Heart left ventricle (tissue), 16 donors: ENCODE measurements at regions of chr3 and their contacts with region 1.

Region 1: GRCh38 chr3:48556793-48557626 is at the start of gene PFKFB4:
- DNase-seq: peak; percentile 99
- ATAC-seq: peak; percentile 92 to 94 (median 93)
- H3K4me3 ChIP-seq: peak within 1 kb of the TSS; percentile 26 to 70 (median 58)
- H3K27ac ChIP-seq: peak within 1 kb of the TSS in 11 of 12 donors; percentile 19 to 92 (median 64)
- H3K4me1 ChIP-seq: peaks cover 5 to 83% (median 33%) of the 10 kb centered on the region in 12 donors
- H3K27me3 ChIP-seq: no peaks in the 10 kb centered on the region
- CTCF ChIP-seq: peak in 4 of 12 donors; percentile 11 to 34 (median 20)
- POLR2A ChIP-seq: peak in 1 of 2 donors; percentile 38
- total RNA-seq, gene PFKFB4: 0.44 to 9.1 (median 1.0) TPM

Region 2: DNA sequence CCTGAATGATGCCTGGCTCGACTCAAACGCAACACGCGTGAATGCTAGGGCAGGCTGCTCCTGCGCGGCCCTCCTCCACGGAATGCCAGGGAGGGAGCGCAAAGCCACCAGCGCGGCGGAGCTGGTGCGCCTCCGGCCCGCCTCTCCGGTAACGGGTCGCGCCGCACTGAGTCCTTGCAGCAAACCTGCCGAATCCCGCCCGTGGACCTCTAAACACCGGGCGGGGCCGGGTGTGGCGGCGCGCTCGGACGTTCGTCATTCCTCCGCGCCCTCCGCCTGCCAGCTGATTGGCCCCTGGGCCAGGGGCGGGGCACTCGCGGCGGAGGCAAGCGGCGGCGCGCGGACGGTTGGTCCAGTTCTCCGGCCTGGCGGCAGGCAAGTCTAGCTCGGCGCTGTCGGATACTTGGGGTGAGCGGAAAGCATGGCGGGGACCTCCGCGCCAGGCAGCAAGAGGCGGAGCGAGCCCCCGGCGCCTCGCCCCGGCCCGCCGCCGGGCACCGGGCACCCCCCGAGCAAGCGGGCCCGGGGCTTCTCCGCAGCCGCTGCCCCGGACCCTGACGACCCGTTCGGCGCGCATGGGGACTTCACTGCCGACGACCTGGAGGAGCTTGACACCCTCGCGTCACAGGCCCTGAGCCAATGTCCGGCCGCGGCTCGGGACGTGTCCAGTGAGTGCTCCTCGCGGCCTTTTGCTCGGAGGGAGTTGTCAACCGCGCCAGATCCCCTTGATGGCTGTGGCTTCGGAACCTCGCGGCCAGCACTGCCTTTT is 110.4 kb before region 1 on chr3 and contains the start of gene ATRIP:
- intact Hi-C with region 1: loop called in 1 of 10 experiments (anchors 5 kb)
- DNase-seq: peak; percentile 91 to 96 (median 93)
- ATAC-seq: peak; percentile 95 to 99 (median 99)
- H3K4me3 ChIP-seq: peak within 1 kb of the TSS; percentile 60 to 98 (median 84)
- H3K27ac ChIP-seq: peak within 1 kb of the TSS; percentile 49 to 94 (median 88)
- H3K4me1 ChIP-seq: peaks cover 4 to 31% (median 23%) of the 10 kb centered on the region in 12 donors
- H3K27me3 ChIP-seq: no peaks in the 10 kb centered on the region
- CTCF ChIP-seq: peak in 3 of 12 donors; percentile 8 to 40 (median 9)
- POLR2A ChIP-seq: peak; percentile 90 to 98
- total RNA-seq, gene ATRIP: 2.1 to 5.0 (median 3.6) TPM

Region 3: DNA sequence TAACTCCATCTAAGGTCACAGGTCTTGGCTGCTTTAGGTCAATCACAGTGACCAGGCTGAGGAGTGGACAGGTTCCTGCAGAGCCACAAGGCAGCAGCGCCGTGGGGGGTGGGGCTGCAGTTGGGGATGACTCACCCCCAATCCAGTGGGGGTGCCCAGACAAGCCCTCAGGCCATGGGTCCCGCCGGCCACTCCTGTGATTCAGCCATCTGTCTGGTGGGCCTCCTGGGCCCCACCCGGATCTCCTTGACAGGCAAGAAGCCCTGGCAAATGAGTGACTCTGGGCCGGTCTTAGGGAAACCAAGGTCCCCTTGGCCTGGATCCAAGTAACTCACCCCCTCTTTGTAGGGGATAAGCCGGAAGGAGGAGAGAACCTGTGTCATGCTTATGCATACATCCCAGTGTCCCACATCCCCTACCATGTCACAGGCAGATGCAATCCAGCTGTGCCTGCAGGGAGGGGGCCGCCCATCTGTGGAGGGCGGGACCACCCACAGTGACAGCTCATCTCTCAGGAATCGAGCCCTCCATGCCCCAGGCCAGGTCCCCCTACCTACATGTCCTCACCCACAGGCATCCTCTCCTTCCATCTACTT is 38.6 kb after region 1 on chr3:
- intact Hi-C with region 1: loop called in 4 of 10 experiments (anchors 5 kb)
- DNase-seq: peak in 3 of 5 donors; percentile 50 to 83 (median 64)
- ATAC-seq: peak in 2 of 4 donors; percentile 6 to 14
- H3K4me3 ChIP-seq: peak overlapping the region in 4 of 12 donors; percentile 34 to 53 (median 44)
- H3K27ac ChIP-seq: peak overlapping the region in 8 of 12 donors; percentile 1 to 97 (median 90)
- H3K4me1 ChIP-seq: peaks cover 6 to 66% (median 57%) of the 10 kb centered on the region in 12 donors
- H3K27me3 ChIP-seq: peaks cover 0 to 17% (median 0%) of the 10 kb centered on the region in 9 donors
- CTCF ChIP-seq: no peak
- POLR2A ChIP-seq: no peak

Region 4: GRCh38 chr3:48609088-48610005 is 52.3 kb after region 1 on chr3 and contains the start of gene UQCRC1:
- intact Hi-C with region 1: loop called in 6 of 10 experiments (anchors 2 to 5 kb)
- DNase-seq: peak; percentile 92 to 97 (median 94)
- ATAC-seq: peak; percentile 99
- H3K4me3 ChIP-seq: peak within 1 kb of the TSS; percentile 65 to 98 (median 84)
- H3K27ac ChIP-seq: peak within 1 kb of the TSS; percentile 83 to 98 (median 94)
- H3K4me1 ChIP-seq: peaks cover 0 to 51% (median 19%) of the 10 kb centered on the region in 12 donors
- H3K27me3 ChIP-seq: no peaks in the 10 kb centered on the region
- CTCF ChIP-seq: peak; percentile 58 to 91 (median 79)
- POLR2A ChIP-seq: peak; percentile 85 to 89
- total RNA-seq, gene UQCRC1: 580 to 2,191 (median 1,008) TPM

Region 5: DNA sequence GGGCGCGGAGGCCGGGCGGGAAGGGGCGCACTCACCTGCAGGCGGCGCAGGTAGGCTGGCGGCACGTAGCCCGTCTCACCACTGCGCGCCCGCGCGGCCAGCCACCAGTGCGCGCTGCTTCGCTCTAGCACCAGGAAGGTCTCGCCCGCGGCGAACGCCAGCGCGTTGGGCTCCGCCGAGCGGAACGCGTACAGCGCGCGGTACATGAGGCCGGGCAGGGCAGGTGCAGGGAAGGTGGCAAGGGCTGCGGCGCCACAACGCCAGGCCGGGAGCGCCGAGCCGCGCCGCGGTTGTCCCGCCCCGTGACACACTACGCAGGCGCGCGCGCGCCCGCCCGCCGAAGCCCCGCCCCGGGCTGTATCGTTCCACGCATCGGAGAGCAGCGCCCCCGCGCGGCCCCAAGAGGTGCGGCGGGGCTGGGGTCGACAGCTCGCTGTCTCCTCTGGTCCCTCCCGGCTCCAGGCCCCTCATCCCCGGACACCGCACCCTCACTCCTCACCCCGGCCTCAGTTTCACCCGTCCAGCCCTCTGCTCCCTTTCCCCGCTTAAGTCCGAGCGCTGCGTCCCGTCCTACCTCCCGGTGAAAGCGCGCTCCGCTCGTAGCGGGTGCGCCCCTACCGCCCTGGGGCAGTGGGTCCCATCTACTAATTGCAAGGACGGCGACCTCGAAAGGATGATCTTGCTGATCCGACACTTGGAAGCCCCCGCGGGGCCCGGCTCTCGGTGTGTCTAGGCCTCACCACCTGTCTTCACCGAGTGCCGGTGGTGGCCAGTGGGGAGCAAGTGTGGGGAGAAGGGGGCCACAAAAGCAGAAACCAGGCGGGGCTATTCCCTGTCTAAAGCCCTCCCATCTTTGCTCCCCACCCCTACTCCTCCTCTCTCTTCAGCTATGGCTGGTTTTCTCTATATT is 128.8 kb after region 1 on chr3 and contains the start of gene NCKIPSD:
- intact Hi-C with region 1: loop called in 1 of 10 experiments (anchors 5 kb)
- DNase-seq: peak; percentile 88 to 96 (median 92)
- ATAC-seq: peak; percentile 69 to 94 (median 89)
- H3K4me3 ChIP-seq: peak within 1 kb of the TSS; percentile 80 to 100 (median 94)
- H3K27ac ChIP-seq: peak within 1 kb of the TSS; percentile 71 to 92 (median 86)
- H3K4me1 ChIP-seq: peaks cover 8 to 45% (median 34%) of the 10 kb centered on the region in 12 donors
- H3K27me3 ChIP-seq: no peaks in the 10 kb centered on the region
- CTCF ChIP-seq: peak; percentile 76 to 94 (median 88)
- POLR2A ChIP-seq: peak; percentile 32 to 92
- total RNA-seq, gene NCKIPSD: 9.8 to 47.6 (median 14.7) TPM